ENCODE measurements at regions of chr6 and their contacts with region 1.

Region 1: DNA sequence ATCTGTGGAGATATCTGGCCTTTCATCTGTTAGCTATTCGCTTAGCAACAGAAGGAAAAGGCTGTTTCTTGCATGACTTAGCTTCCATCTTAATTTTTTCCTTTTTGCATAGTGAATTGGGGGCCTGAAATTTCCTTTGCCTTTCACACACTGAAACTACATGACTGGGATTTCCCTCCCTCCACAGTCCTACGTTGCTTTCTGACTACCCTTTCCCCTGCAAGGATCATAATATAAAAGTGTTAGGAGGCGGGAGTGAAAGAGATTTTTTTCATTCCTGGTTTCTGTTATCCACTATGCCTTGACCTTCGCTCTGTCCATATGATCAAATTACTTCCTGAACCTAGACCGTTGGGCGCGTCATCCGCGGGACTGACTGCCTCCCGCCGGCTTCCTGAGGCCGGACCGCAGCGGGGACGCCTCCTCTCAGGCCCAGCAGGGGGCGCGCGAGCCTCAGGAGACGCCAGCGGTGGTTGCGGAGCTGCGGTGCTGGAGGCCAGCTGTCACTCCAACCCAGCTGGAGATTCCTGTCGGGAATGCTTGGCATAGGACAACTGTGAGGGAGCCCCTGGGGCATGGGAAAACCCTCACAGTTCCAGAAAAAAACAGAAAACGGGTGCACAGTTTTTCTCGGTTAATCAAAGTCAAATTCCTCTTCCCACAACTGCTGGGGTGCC is 55.6 kb downstream of the MEP1A start:
- DNase-seq: peak; percentile 69
- H3K4me3 Mint-ChIP-seq: peak overlapping the region; percentile 32
- H3K27ac Mint-ChIP-seq: no peak overlapping the region
- H3K4me1 Mint-ChIP-seq: peaks cover 4% of the 10 kb centered on the region
- H3K27me3 Mint-ChIP-seq: peaks cover 30% of the 10 kb centered on the region

Region 2: GRCh38 chr6:46990031-46990644 is 141.3 kb after region 1 on chr6:
- CTCF ChIA-PET with region 1: interaction called, 3 read pairs
- intact Hi-C with region 1: loop called (anchors 2 kb)
- DNase-seq: no peak
- H3K4me3 Mint-ChIP-seq: no peak overlapping the region
- H3K27ac Mint-ChIP-seq: no peak overlapping the region
- H3K4me1 Mint-ChIP-seq: no peaks in the 10 kb centered on the region
- H3K27me3 Mint-ChIP-seq: peaks cover 26% of the 10 kb centered on the region

Region 3: GRCh38 chr6:47047479-47048407 is 198.9 kb after region 1 on chr6:
- CTCF ChIA-PET with region 1: interaction called, 25 read pairs
- intact Hi-C with region 1: loop called (anchors 1 kb)
- DNase-seq: peak; percentile 49
- H3K4me3 Mint-ChIP-seq: no peak overlapping the region
- H3K27ac Mint-ChIP-seq: no peak overlapping the region
- H3K4me1 Mint-ChIP-seq: no peaks in the 10 kb centered on the region
- H3K27me3 Mint-ChIP-seq: peaks cover 7% of the 10 kb centered on the region

Region 4: DNA sequence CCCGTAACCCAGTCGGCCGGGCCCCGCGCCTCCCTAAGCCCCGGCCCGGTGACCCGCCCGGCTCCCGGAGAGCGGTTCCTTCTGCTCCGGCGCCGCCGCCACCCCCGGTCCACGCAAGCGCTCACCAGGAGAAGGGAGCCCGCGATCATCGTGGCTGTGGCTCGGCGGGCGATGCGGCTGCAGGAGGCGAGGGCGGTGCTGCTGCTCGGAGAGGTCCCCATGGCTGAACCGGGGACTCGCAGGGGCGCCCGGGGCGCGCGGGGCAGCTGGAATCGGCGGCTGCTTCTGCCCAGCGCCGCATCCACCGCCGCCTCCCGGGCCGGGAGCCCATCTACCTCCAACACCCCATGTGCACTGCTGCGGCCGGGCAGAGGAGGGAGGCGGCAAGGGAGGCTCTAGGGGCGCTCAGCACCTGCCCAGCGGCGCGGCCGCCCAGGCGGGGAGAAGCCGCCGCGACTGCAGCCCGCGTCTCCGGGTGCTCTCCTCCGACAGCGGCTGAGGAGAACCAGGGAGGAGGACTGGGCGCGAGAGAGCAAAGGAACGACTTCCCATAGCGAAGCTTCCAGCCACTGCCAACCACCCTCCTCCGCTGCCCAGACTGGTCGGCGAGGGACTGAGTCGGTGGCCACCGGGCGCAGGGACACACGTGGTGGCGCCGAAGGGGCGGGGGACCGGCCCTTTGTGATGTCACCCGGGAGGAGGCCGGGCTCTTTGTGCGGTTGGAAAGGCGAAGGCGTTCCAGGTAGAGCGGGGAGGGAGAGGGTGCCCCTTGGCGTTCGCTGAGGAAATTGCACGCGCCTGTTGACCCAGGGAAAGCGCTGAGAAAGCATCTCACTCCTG is 460.7 kb after region 1 on chr6 and contains the start of gene TNFRSF21:
- CTCF ChIA-PET with region 1: interaction called, 4 read pairs
- intact Hi-C with region 1: loop called (anchors 1 kb)
- DNase-seq: peak; percentile 91
- H3K4me3 Mint-ChIP-seq: peak within 1 kb of the TSS; percentile 74
- H3K27ac Mint-ChIP-seq: no peak within 1 kb of the TSS
- H3K4me1 Mint-ChIP-seq: peaks cover 7% of the 10 kb centered on the region
- H3K27me3 Mint-ChIP-seq: peaks cover 42% of the 10 kb centered on the region
- total RNA-seq, gene TNFRSF21: 3.6 to 4.3 TPM

Measured in activated naive CD4-positive, alpha-beta T cell treated with anti-CD3 and anti-CD28 coated beads for 36 hours (primary cell).